Endothelial cell of umbilical vein (primary cell): ENCODE measurements at regions of chr19 and their contacts with region 1.

Region 1: GRCh38 chr19:41641879-41642485 is 15.1 kb upstream of the CEACAM4 start:
- DNase-seq: peak; percentile 54
- H3K4me3 ChIP-seq: no peak overlapping the region
- H3K27ac ChIP-seq: no peak overlapping the region
- H3K4me1 ChIP-seq: no peaks in the 10 kb centered on the region
- H3K27me3 ChIP-seq: peaks cover 1 to 2% of the 10 kb centered on the region in 2 experiments
- CTCF ChIP-seq: peak; percentile 82 to 83
- POLR2A ChIP-seq: no peak

Region 2: DNA sequence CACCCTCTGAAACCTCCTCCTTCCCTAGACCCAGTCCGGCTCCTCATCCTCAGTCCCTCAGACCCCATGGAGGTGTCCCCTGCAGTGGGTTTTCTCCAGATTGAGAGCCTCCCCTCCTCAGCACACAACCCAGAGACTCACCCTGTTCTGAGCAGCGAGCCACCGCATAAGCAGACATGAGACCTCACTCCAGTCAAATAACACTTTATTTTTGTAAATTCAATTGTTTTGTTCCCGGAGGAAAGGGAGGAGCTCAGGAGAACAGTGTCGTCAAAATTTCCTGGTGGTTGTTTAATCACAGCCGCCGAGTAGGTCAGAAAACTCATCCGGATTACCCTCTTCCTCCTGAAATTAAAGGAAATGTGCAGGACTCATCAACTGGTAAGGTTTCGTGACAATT is 141.5 kb before region 1 on chr19:
- CTCF ChIA-PET with region 1: no interaction called
- POLR2A ChIA-PET with region 1: no interaction called
- dilution Hi-C with region 1: no loop called
- intact Hi-C with region 1: no loop called
- DNase-seq: peak; percentile 71
- H3K4me3 ChIP-seq: peak overlapping the region; percentile 5 to 71 (median 35)
- H3K27ac ChIP-seq: peak overlapping the region; percentile 93
- H3K4me1 ChIP-seq: peaks cover 18% of the 10 kb centered on the region
- H3K27me3 ChIP-seq: peaks cover 5 to 7% of the 10 kb centered on the region in 2 experiments
- CTCF ChIP-seq: no peak
- POLR2A ChIP-seq: no peak

Region 3: DNA sequence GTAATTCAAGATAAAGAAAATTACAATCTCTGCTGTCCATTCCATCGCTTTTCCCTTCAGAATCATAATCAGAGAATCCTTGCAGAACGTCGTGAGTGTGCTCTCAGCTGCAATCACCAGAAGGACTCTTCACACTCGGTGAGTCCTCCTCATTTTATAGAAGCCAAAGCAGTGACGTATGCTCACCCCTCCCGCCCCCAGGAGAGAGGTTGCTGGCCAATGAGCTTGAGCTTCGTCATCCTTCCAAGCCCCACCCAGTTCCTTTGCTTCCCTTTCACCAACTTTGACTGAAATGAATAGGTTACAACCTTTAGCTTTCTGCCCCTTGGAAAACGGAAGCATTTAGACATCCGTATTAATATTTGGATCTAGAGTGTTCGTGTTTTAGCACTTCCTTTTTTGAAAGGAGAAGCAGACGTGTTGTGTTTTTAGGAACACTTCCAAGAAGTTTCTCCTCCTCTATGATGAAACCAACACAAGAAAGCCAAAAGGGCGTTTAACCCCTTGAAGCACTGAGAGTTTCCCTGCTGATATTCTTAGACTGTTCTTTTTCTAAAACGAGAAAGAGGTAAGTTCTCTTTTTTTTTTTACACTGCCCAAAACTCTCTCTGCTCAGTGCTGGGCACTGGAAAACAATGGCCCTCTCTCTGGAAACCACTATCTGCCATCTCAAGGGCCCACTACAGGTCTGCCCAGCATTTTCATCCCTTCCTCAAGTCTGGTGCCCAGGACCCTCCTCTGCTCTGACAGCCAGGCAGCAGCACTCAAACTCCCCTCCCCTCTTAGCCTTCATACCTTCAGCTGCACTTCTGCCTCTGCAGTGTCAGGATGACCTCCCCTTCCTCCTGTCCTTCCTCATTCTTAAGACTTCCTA is 110.3 kb before region 1 on chr19:
- CTCF ChIA-PET with region 1: no interaction called
- POLR2A ChIA-PET with region 1: no interaction called
- dilution Hi-C with region 1: no loop called
- intact Hi-C with region 1: no loop called
- DNase-seq: peak; percentile 98
- H3K4me3 ChIP-seq: no peak overlapping the region
- H3K27ac ChIP-seq: peak overlapping the region; percentile 85
- H3K4me1 ChIP-seq: peaks cover 31% of the 10 kb centered on the region
- H3K27me3 ChIP-seq: peaks cover 17 to 24% of the 10 kb centered on the region in 2 experiments
- CTCF ChIP-seq: no peak
- POLR2A ChIP-seq: peak; percentile 85

Region 4: DNA sequence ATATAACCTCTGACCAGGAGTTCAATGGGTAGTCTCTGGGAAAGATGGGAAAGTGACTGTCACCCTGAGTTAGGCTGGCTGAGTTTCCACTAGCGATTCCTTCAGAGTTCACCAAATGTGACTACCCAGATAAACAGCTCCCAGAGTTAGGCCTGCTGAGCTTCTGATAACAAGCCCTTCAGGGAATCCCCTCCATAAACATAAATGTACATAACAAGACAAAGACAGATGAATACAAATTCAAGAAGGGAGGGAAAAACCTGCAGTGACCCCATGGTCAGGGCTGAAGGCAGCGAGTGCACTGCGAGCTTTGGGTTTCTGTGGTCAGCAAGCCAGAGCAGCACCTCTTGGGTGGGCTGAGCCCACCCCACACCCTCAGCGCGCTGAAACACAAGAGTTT is 10.3 kb after region 1 on chr19:
- CTCF ChIA-PET with region 1: interaction called, 30 read pairs
- POLR2A ChIA-PET with region 1: no interaction called
- dilution Hi-C with region 1: no loop called
- intact Hi-C with region 1: no loop called
- DNase-seq: no peak
- H3K4me3 ChIP-seq: no peak overlapping the region
- H3K27ac ChIP-seq: no peak overlapping the region
- H3K4me1 ChIP-seq: no peaks in the 10 kb centered on the region
- H3K27me3 ChIP-seq: peaks cover 4% of the 10 kb centered on the region in 2 experiments
- CTCF ChIP-seq: no peak
- POLR2A ChIP-seq: no peak

Region 5: GRCh38 chr19:41691268-41691970 is 49.4 kb after region 1 on chr19:
- CTCF ChIA-PET with region 1: interaction called, 45 read pairs
- POLR2A ChIA-PET with region 1: no interaction called
- dilution Hi-C with region 1: no loop called
- intact Hi-C with region 1: loop called (anchors 2 kb)
- DNase-seq: peak; percentile 20
- H3K4me3 ChIP-seq: no peak overlapping the region
- H3K27ac ChIP-seq: no peak overlapping the region
- H3K4me1 ChIP-seq: no peaks in the 10 kb centered on the region
- H3K27me3 ChIP-seq: peaks cover 0 to 2% of the 10 kb centered on the region in 2 experiments
- CTCF ChIP-seq: peak; percentile 61 to 71
- POLR2A ChIP-seq: no peak

Region 6: GRCh38 chr19:41844601-41845000 is 202.6 kb after region 1 on chr19 and contains the start of gene LYPD4:
- CTCF ChIA-PET with region 1: no interaction called
- POLR2A ChIA-PET with region 1: no interaction called
- dilution Hi-C with region 1: no loop called
- intact Hi-C with region 1: no loop called
- DNase-seq: no peak
- H3K4me3 ChIP-seq: no peak within 1 kb of the TSS
- H3K27ac ChIP-seq: no peak within 1 kb of the TSS
- H3K4me1 ChIP-seq: no peaks in the 10 kb centered on the region
- H3K27me3 ChIP-seq: no peaks in the 10 kb centered on the region
- CTCF ChIP-seq: no peak
- POLR2A ChIP-seq: no peak
- total RNA-seq, gene LYPD4: not detected in 2 replicates